H1 (cell line): ENCODE measurements at regions of chr15 and their contacts with region 1.

Region 1: DNA sequence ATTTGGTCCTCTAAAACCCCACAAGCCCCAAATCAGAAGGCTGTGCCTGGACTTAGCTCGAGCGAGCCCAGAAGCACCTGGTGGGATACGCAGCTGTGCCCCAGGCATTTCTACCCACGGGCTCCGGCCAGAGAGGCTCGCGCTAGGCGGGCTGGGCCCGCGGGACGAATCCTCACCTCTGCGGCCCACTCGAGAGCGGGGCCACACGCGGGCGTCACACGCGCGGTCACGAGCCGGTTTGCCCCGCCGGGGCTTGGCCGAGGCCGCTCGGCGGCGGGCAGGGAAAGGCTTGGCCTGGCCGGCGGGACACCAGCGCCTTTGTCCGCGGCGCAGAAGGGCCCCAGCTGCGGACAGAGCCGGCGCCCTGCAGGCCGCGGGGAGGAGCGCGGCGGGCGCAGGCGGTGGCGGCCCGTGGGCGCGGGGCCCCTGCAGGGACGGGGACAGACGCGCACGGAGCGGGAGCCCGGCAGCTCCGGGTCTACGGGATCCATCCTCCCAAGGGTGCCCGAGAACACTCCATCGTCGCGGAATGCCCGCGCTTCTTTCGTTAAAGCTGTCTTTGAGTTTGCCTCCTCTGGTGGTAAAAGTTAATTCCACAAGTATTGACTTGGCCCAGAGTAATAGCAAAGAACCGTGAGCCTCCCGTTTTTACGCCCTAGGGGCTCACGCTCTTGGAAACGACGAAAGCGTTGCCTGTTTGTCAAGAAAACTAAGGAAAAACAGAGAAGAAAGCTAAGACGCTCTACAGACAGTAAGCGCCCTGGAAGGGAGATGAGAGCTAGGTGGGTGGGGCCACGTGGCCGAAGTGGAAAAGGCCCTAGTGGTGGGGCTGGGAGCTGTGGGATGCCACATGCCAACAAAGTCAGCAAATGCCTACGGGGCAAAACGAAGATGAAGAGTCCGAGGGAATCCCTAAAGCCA is 26.4 kb downstream of the TYRO3 start:
- DNase-seq: peak in 1 of 2 experiments; percentile 83
- H3K4me3 ChIP-seq: peak overlapping the region; percentile 11 to 62 (median 35)
- H3K27ac ChIP-seq: 0 out of 2 replicates have a peak overlapping the region, but pooled peaks have one; percentile 6
- H3K4me1 ChIP-seq: peaks cover 0 to 7% (median 3%) of the 10 kb centered on the region in 4 experiments; a peak in 4 of 7 replicates
- H3K27me3 ChIP-seq: no peaks in the 10 kb centered on the region
- CTCF ChIP-seq: peak in 2 of 3 experiments; percentile 8 to 25; a peak in 3 of 4 replicates
- EP300 ChIP-seq: no peak
- POLR2A ChIP-seq: no peak; a peak in 1 of 3 replicates
- RAD21 ChIP-seq: peak in 1 of 2 experiments; percentile 36; a peak in 2 of 4 replicates

Region 2: GRCh38 chr15:41493205-41493901 is 92.0 kb before region 1 on chr15 and contains the start of gene ITPKA:
- CTCF ChIA-PET with region 1: no interaction called
- POLR2A ChIA-PET with region 1: no interaction called
- DNase-seq: peak in 1 of 2 experiments; percentile 85
- H3K4me3 ChIP-seq: peak within 1 kb of the TSS; percentile 42 to 78 (median 54)
- H3K27ac ChIP-seq: no peak within 1 kb of the TSS
- H3K4me1 ChIP-seq: peaks cover 0 to 15% (median 8%) of the 10 kb centered on the region in 4 experiments; a peak in 6 of 7 replicates
- H3K27me3 ChIP-seq: peaks cover 56 to 78% (median 75%) of the 10 kb centered on the region in 4 experiments
- CTCF ChIP-seq: no peak
- EP300 ChIP-seq: no peak
- POLR2A ChIP-seq: no peak
- RAD21 ChIP-seq: no peak
- total RNA-seq, gene ITPKA: 0.67 and 0.99 TPM in 2 replicates

Region 3: GRCh38 chr15:41544650-41545015 is 40.8 kb before region 1 on chr15:
- CTCF ChIA-PET with region 1: interaction called, 3 read pairs
- POLR2A ChIA-PET with region 1: interaction called, 11 read pairs
- DNase-seq: no peak
- H3K4me3 ChIP-seq: peak overlapping the region in 1 of 4 experiments; percentile 76; a peak in 3 of 8 replicates
- H3K27ac ChIP-seq: no peak overlapping the region
- H3K4me1 ChIP-seq: no peaks in the 10 kb centered on the region; a peak in 2 of 7 replicates
- H3K27me3 ChIP-seq: peaks cover 0 to 3% (median 1%) of the 10 kb centered on the region in 4 experiments; a peak in 1 of 7 replicates
- CTCF ChIP-seq: no peak
- EP300 ChIP-seq: no peak
- POLR2A ChIP-seq: no peak
- RAD21 ChIP-seq: no peak

Region 4: GRCh38 chr15:41557673-41558399 is 27.6 kb before region 1 on chr15:
- CTCF ChIA-PET with region 1: interaction called, 80 read pairs
- POLR2A ChIA-PET with region 1: interaction called, 643 read pairs
- DNase-seq: peak; percentile 84 to 86
- H3K4me3 ChIP-seq: peak overlapping the region; percentile 46 to 96 (median 74); a peak in 7 of 8 replicates
- H3K27ac ChIP-seq: no peak overlapping the region
- H3K4me1 ChIP-seq: peaks cover 10 to 38% (median 31%) of the 10 kb centered on the region in 4 experiments
- H3K27me3 ChIP-seq: no peaks in the 10 kb centered on the region; a peak in 2 of 7 replicates
- CTCF ChIP-seq: peak; percentile 83 to 92 (median 84)
- EP300 ChIP-seq: peak in 1 of 2 experiments; percentile 43; a peak in 1 of 3 replicates
- POLR2A ChIP-seq: no peak
- RAD21 ChIP-seq: peak; percentile 86 to 93

Region 5: GRCh38 chr15:41621200-41622193 is 36.1 kb after region 1 on chr15:
- CTCF ChIA-PET with region 1: interaction called, 3 read pairs
- POLR2A ChIA-PET with region 1: interaction called, 11 read pairs
- DNase-seq: peak; percentile 60 to 85
- H3K4me3 ChIP-seq: peak overlapping the region; percentile 16 to 61 (median 39)
- H3K27ac ChIP-seq: no peak overlapping the region
- H3K4me1 ChIP-seq: peaks cover 0 to 7% (median 4%) of the 10 kb centered on the region in 4 experiments; a peak in 4 of 7 replicates
- H3K27me3 ChIP-seq: peaks cover 0 to 6% (median 3%) of the 10 kb centered on the region in 4 experiments; a peak in 4 of 7 replicates
- CTCF ChIP-seq: no peak
- EP300 ChIP-seq: 0 out of 3 replicates have a peak, but pooled peaks of 1 of the 2 experiments have one; percentile 29
- POLR2A ChIP-seq: peak; percentile 50 to 52; a peak in 1 of 3 replicates
- RAD21 ChIP-seq: no peak